Stomach (tissue), 19 donors: ENCODE measurements at regions of chr7 and their contacts with region 1.

Region 1: GRCh38 chr7:157250605-157251228 is 86.1 kb upstream of the DNAJB6 start:
- DNase-seq: peak in 1 of 2 donors; percentile 73
- H3K4me3 ChIP-seq: no peak overlapping the region
- H3K27ac ChIP-seq: no peak overlapping the region
- H3K4me1 ChIP-seq: peaks cover 0 to 5% (median 0%) of the 10 kb centered on the region in 4 donors
- H3K27me3 ChIP-seq: no peaks in the 10 kb centered on the region
- CTCF ChIP-seq: peak in 4 of 7 experiments; percentile 38 to 67 (median 54)
- EP300 ChIP-seq: no peak
- POLR2A ChIP-seq: no peak

Region 2: GRCh38 chr7:156969972-156970420 is 280.7 kb before region 1 on chr7:
- intact Hi-C with region 1: loop called (anchors 10 kb)
- DNase-seq: no peak
- H3K4me3 ChIP-seq: no peak overlapping the region
- H3K27ac ChIP-seq: no peak overlapping the region
- H3K4me1 ChIP-seq: no peaks in the 10 kb centered on the region
- H3K27me3 ChIP-seq: no peaks in the 10 kb centered on the region
- CTCF ChIP-seq: peak in 4 of 7 experiments; percentile 12 to 36 (median 19)
- EP300 ChIP-seq: no peak
- POLR2A ChIP-seq: no peak

Region 3: DNA sequence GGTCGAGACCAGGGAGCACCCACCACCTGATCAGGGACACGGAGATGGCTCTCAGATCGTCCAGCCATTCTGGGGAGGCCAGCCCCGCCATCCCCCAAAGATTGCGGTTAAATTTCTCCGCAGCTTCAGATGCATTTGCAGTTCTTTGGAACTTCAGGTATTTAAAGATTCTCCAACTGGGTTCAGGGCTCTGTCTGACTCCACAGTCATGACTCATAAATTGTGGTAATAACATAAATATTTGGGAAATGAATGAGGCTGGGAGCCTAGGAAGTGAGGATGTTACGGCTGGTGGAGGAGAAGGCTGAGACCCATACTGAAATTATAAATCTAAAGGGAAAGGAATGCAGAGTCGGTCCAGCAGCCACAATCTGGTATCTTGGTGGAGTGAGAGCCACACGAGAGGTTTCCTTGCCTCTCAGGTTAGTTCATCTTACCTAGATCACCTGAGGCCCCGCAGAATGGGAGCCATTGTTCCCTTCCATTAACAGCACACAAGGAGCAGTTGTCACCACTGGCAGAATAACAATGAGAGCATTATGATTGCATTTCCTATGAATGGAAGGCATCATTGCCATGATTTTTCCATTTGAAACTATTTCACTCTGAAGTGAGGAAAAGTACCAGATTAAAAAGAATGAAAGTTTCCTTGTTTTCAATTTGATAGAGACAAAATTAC is 59.4 kb after region 1 on chr7:
- intact Hi-C with region 1: no loop called
- DNase-seq: peak in 1 of 2 donors; percentile 34
- H3K4me3 ChIP-seq: no peak overlapping the region
- H3K27ac ChIP-seq: no peak overlapping the region
- H3K4me1 ChIP-seq: no peaks in the 10 kb centered on the region
- H3K27me3 ChIP-seq: no peaks in the 10 kb centered on the region
- CTCF ChIP-seq: no peak
- EP300 ChIP-seq: no peak
- POLR2A ChIP-seq: no peak